ENCODE measurements at regions of chr2 and their contacts with region 1.

Region 1: DNA sequence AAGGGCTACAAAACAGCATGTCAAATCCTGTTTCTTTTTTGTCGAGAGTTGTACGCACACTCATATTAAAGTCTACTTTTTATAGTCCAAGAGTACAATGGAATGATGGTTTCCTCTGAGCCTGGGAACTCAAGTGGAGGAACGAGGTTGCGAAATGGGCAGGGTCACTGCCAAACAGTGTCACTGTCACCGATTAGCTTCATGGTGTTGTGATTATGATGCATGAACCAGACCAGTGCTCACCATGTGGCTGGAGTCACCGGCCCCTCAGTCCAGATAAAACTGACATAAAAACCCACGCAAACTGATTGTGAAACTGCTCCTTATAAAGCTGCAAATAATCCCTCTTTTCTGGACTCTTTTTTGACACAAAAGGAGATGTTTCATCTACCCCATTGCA is 122.0 kb downstream of the COPS8 start:
- DNase-seq: peak; percentile 91
- ATAC-seq: peak; percentile 81 to 90

Region 2: GRCh38 chr2:237315170-237315828 is 107.7 kb after region 1 on chr2:
- intact Hi-C with region 1: loop called in 1 of 2 experiments (anchors 5 kb)
- DNase-seq: peak; percentile 88
- ATAC-seq: peak; percentile 94 to 98